ENCODE measurements at regions of chr5 and their contacts with region 1.

Region 1: DNA sequence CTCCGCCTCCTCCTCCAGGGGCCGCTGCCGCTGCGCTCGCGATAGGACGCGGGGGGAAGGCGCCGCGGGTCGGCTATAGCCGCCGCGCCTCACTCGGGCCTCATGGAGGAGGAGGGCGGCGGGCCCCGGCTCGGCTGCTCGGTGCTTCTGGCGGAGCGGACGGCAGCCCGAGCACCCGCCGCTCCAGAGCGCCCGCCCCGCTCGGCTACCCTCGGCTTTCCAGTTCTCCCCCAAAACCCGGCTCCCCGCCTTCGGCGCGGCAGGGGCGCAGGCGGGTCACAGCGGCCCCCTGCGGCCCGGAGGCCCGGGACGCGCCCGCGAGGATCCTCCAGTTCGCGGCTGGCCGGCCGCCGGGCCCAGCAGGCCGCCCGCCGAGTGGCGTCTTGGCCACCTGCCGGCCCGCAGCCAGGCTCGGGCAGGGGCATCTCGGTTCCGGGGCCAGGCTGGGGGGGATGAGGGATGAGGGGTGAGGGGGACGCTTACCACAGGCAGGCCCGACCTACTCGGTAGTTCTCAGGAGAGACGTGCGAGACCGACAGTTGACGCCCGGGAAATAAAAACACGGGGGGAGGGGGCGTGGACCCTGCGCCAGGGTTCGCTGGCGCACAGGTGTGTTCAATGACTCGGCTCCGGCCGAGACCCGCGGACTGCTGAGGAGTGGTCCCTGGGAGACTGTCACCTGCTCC is at the start of gene PAIP1:
- DNase-seq: peak; percentile 90
- ATAC-seq: peak; percentile 93
- H3K4me3 Mint-ChIP-seq: peak within 1 kb of the TSS; percentile 89
- H3K27ac Mint-ChIP-seq: peak within 1 kb of the TSS; percentile 94
- H3K4me1 Mint-ChIP-seq: peaks cover 21% of the 10 kb centered on the region
- H3K27me3 Mint-ChIP-seq: no peaks in the 10 kb centered on the region
- CTCF ChIP-seq: peak; percentile 41
- total RNA-seq, gene PAIP1: 35.1 and 38.3 TPM in 2 replicates

Region 2: GRCh38 chr5:41924872-41925554 is 1632.0 kb before region 1 on chr5 and contains the start of gene FBXO4:
- CTCF ChIA-PET with region 1: no interaction called
- POLR2A ChIA-PET with region 1: no interaction called
- intact Hi-C with region 1: loop called (anchors 5 kb)
- DNase-seq: peak; percentile 82
- ATAC-seq: peak; percentile 95
- H3K4me3 Mint-ChIP-seq: peak within 1 kb of the TSS; percentile 93
- H3K27ac Mint-ChIP-seq: peak within 1 kb of the TSS; percentile 97
- H3K4me1 Mint-ChIP-seq: peaks cover 24% of the 10 kb centered on the region
- H3K27me3 Mint-ChIP-seq: no peaks in the 10 kb centered on the region
- CTCF ChIP-seq: no peak
- total RNA-seq, gene FBXO4: 14.8 and 15.9 TPM in 2 replicates

Region 3: DNA sequence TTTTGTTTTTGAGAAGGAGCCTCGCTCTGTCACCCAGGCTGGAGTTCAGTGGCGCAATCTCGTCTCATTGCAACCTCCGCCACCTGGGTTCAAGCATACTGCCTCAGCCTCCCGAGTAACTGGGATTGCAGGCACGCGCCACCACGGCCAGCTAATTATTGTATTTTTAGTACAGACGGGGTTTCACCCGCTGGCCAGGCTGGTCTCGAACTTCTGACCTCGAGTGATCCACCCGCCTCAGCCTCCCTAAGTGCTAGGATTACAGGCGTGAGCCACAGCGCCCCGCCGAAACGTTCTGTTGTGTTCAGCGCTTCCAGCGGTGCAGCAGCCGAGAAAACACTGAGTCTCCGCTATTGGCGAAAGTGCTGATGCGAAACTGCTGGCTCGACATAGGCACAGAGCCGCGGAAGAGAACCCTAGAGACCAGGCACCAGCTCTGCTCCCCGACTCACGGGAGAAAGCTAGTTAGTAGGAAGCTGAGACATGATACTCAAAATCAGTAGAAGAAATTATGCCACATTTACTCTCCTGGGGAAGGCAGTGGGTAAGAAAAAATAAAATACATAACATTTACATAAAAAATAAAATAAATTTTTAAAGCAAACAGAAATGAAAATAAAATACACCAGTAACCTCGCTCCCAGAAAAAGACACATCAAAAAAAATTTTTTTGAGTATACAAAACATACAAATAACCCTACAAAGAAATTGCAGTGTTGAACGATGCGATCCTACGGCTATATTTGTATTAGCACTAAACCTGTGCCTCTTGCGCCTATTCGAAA is 548.4 kb before region 1 on chr5:
- CTCF ChIA-PET with region 1: no interaction called
- POLR2A ChIA-PET with region 1: no interaction called
- intact Hi-C with region 1: loop called (anchors 5 kb)
- DNase-seq: peak; percentile 77
- ATAC-seq: peak; percentile 53
- H3K4me3 Mint-ChIP-seq: peak overlapping the region; percentile 89
- H3K27ac Mint-ChIP-seq: peak overlapping the region; percentile 98
- H3K4me1 Mint-ChIP-seq: peaks cover 31% of the 10 kb centered on the region
- H3K27me3 Mint-ChIP-seq: no peaks in the 10 kb centered on the region
- CTCF ChIP-seq: no peak

Region 4: DNA sequence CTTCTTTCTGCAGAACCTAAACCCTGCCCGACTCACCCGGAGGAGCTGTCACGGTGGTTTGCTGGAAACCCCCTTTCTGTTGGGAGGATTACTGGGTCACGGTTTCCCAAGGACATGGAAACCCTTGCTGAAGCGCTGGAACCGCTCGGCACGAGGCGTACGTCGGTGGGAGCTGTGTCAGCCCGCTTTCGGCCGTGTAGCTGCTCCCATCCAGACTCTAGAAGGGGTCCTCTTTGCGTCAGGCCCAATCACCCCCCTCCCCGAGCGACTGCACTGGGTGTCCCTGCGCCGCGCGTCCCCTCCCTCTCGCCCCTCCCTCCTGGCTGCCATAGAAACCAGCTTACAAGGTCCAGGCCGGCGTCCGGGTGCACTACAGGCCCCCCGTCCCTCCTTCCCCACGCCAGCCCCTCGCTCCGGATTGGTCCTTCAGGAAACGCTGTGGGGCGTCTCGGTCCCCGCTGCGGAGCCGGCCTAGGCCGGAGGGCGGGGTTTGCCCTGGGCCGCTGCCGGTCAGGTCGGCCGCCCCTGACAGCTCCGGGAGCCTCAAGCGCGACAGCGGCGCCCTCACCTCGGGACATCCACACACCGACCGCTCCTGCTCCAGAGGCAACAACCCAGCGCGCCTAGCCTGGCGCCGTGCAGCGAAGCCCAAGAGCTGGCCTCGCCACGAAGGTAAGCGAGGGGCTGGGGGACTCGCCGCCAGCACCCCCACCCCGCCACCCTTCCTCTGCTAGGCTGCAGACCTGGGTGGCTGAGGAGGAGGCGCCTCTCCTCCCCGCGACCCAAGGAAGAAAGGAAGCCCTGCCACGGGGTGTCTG is 365.1 kb before region 1 on chr5 and contains the start of gene NIM1K:
- CTCF ChIA-PET with region 1: no interaction called
- POLR2A ChIA-PET with region 1: no interaction called
- intact Hi-C with region 1: loop called (anchors 1 kb)
- DNase-seq: peak; percentile 45
- ATAC-seq: peak; percentile 65
- H3K4me3 Mint-ChIP-seq: peak within 1 kb of the TSS; percentile 84
- H3K27ac Mint-ChIP-seq: no peak within 1 kb of the TSS
- H3K4me1 Mint-ChIP-seq: peaks cover 28% of the 10 kb centered on the region
- H3K27me3 Mint-ChIP-seq: peaks cover 19% of the 10 kb centered on the region
- CTCF ChIP-seq: no peak
- total RNA-seq, gene NIM1K: 0.39 and 0.51 TPM in 2 replicates

Region 5: GRCh38 chr5:43396762-43397304 is 160.2 kb before region 1 on chr5:
- CTCF ChIA-PET with region 1: no interaction called
- POLR2A ChIA-PET with region 1: no interaction called
- intact Hi-C with region 1: loop called (anchors 2 kb)
- DNase-seq: peak; percentile 67
- ATAC-seq: peak; percentile 100
- H3K4me3 Mint-ChIP-seq: peak overlapping the region; percentile 99
- H3K27ac Mint-ChIP-seq: peak overlapping the region; percentile 96
- H3K4me1 Mint-ChIP-seq: peaks cover 20% of the 10 kb centered on the region
- H3K27me3 Mint-ChIP-seq: no peaks in the 10 kb centered on the region
- CTCF ChIP-seq: no peak

Region 6: DNA sequence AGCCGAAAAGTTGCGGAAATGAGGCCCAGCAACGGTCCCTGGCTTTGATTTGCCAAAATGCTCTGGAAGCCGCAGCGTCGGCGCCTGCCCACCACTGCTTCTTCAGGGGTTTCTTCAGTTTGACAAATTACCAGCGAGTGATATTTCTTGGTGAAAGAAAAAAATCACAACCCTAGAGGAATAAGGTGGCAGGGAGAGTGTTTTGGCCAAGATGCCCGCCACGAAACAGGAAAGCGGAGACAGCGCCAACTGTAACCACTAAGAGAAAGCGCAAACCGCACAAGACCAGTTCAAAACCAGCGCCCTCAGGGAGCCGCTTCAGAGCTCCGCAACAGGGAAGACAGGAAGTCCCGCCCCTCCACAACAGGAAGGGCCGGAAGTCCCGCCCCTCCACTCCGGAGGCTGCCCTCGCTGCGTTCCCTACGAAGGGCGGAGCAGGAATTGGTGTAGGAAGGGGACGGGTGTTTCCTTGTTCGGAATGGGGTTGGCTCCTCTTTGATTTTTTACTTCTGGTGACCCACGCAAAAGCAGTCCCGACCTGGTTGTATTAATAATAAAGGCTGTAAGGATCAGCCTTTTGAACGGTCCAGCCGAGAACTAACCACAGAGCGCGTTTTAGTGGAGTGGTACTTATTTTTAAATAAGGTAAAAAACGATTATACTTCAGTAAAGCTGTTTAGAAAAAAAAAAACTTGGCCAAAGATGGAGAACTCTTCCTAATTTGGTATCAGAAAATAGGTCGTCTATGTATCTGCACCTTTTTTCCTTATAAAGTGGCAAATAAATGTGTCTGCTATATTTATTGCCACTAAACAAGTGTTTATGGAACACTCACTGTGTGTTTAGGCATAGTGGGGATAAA is 42.0 kb before region 1 on chr5 and contains the start of gene C5orf34:
- CTCF ChIA-PET with region 1: interaction called, 3 read pairs
- POLR2A ChIA-PET with region 1: interaction called, 10 read pairs
- intact Hi-C with region 1: loop called (anchors 1 kb)
- DNase-seq: peak; percentile 92
- ATAC-seq: peak; percentile 96
- H3K4me3 Mint-ChIP-seq: peak within 1 kb of the TSS; percentile 95
- H3K27ac Mint-ChIP-seq: peak within 1 kb of the TSS; percentile 95
- H3K4me1 Mint-ChIP-seq: peaks cover 23% of the 10 kb centered on the region
- H3K27me3 Mint-ChIP-seq: no peaks in the 10 kb centered on the region
- CTCF ChIP-seq: no peak
- total RNA-seq, gene C5orf34: 4.4 and 4.7 TPM in 2 replicates

Measured in activated B cell treated with CpG ODN at 0.5 μM for 24 hours (primary cell).